BJ (cell line): ENCODE measurements at regions of chr4 and their contacts with region 1.

Region 1: GRCh38 chr4:37802068-37802666 is 24.3 kb upstream of the PGM2 start:
- DNase-seq: no peak
- H3K4me3 ChIP-seq: no peak overlapping the region
- H3K27me3 ChIP-seq: 0 out of 2 replicates have a peak, but pooled peaks cover 3% of the 10 kb centered on the region
- CTCF ChIP-seq: peak; percentile 81

Region 2: GRCh38 chr4:37597034-37597433 is 205.1 kb before region 1 on chr4:
- CTCF ChIA-PET with region 1: interaction called, 135 read pairs
- POLR2A ChIA-PET with region 1: no interaction called
- DNase-seq: no peak
- H3K4me3 ChIP-seq: no peak overlapping the region
- H3K27me3 ChIP-seq: no peaks in the 10 kb centered on the region
- CTCF ChIP-seq: no peak

Region 3: DNA sequence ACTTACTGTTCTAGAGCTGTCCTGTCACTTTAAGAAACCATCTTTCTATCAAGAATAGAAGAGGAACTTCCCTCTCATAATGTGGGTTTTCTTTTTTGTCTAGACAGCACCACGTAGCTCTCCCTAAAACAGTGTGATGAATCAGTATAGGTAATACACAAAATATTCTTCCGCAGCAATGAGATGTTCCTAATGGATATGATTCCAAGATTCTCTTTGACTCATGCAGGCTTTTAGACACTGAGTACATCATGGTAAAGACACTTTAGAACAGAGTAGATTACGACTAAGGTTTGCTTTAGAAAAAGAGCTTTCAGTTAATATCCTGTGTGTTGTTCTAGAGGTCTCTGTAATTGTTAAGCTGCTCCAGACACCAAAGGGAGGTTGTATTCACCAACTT is 227.9 kb after region 1 on chr4:
- CTCF ChIA-PET with region 1: interaction called, 39 read pairs
- POLR2A ChIA-PET with region 1: no interaction called
- DNase-seq: peak; percentile 34
- H3K4me3 ChIP-seq: no peak overlapping the region
- H3K27me3 ChIP-seq: no peaks in the 10 kb centered on the region
- CTCF ChIP-seq: no peak

Region 4: DNA sequence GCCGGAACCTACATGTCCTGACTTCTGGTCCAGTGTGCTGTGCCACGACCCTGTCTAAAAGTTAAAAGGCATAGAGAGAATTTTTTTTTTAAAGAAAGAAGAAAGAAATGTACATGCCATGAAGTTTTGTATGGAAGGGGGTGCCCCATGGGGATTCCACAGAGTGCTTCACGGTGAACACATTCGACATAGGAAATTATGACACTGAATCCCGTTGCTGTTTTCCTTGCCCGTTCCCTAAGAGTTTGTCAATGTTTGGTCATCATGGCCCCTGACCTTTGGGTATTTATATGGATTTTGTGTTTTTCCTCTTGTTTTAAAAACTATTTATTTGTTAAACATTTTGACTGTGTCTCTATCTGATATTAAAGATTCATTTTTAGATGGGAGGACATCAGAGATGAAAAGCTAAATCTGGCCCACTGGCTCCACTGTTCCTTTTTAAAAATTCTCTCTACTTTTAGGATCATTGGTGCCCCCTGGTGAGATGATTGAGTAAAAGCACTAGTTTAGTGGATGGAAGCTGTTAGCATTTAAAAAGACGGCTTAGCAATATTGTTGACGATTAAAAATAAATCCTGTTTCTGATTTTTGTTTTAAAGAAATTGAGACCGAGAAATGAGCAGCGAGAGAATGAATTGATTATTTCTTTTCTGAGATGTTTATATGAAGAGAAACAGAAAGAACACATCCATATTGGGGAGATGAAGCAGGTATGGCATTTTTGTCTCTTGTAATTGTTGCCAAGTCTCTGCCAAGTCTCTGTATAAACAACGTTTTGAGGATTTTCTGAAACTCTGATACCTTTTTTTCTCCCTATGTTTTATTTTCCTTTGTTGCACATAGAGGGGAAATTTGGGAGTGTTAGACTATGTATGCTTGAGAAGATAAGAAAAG is 233.1 kb after region 1 on chr4:
- CTCF ChIA-PET with region 1: interaction called, 39 read pairs
- POLR2A ChIA-PET with region 1: interaction called, 3 read pairs
- DNase-seq: no peak
- H3K4me3 ChIP-seq: no peak overlapping the region
- H3K27me3 ChIP-seq: no peaks in the 10 kb centered on the region
- CTCF ChIP-seq: peak; percentile 66